H1 (cell line): ENCODE measurements at regions of chr4 and their contacts with region 1.

Region 1: DNA sequence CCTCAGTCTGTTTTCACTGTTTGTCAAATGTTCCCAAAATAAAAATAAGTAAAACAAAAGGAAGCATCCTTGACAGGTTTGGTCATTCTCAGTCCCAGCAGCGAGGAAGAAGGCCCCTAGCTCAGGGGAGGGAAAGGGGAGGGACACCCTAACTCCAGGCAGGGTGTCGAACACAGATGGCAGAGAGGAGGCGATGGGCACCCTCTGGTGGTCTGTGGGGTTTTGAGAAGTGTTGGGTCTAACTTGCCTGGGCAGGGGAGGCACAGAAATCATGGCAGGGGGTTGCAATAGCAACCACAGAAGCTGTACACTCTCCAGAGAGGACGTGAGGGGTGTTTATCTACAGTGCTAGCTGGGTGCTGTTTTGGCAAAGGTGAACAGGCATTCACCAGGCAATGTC is 229.8 kb upstream of the SFRP2 start:
- DNase-seq: peak; percentile 39 to 76
- H3K4me3 ChIP-seq: no peak overlapping the region
- H3K27ac ChIP-seq: no peak overlapping the region
- H3K4me1 ChIP-seq: no peaks in the 10 kb centered on the region
- H3K27me3 ChIP-seq: no peaks in the 10 kb centered on the region
- CTCF ChIP-seq: peak; percentile 70 to 79 (median 70)
- EP300 ChIP-seq: no peak
- POLR2A ChIP-seq: no peak
- RAD21 ChIP-seq: peak; percentile 87 to 88

Region 2: DNA sequence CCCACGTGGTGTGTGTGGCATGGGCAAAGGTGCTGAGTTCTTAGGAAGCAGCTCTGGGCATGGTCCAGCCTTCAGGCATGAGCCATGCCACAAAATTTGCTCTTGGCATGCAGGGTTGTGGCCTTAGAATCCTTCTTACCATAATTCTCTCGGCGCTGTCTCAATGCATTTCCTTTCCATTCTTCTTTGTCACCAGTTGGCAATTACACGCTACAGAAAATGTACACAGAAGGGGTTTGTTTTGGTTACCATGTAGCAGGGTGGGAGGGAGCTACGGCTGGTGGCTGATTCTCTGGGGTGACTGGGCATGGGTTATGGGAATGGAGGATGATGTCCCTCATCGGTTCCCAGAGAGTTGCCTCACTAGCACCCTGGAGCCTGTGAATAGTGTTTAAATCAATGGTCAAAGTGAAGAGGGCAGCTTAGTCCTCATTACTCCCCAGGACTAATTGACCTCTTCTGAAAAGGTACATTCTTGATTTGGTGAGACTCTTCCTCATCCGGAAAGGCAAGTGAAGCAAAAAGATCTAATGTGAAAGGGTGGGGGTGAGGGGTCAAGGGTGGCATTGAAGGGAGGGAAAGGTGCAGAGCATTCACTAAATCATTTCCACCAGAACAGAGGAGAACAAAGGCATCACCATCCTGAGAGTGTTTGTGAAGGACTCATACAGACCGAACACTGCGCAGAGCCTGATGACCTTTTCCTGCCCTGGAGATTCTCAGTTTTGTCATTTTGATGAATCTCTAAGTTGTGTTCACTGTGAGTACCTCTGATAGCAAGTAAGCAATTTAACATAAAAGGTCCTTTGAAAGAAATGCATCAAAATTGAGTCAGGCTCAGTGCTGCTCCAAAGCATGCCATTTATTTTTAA is 29.9 kb before region 1 on chr4:
- CTCF ChIA-PET with region 1: no interaction called
- POLR2A ChIA-PET with region 1: no interaction called
- DNase-seq: no peak
- H3K4me3 ChIP-seq: no peak overlapping the region
- H3K27ac ChIP-seq: no peak overlapping the region
- H3K4me1 ChIP-seq: no peaks in the 10 kb centered on the region
- H3K27me3 ChIP-seq: peaks cover 0 to 1% (median 0%) of the 10 kb centered on the region in 4 experiments; a peak in 1 of 7 replicates
- CTCF ChIP-seq: no peak
- EP300 ChIP-seq: no peak
- POLR2A ChIP-seq: no peak
- RAD21 ChIP-seq: no peak

Region 3: GRCh38 chr4:154033921-154034320 is 15.3 kb after region 1 on chr4:
- CTCF ChIA-PET with region 1: interaction called, 13 read pairs
- POLR2A ChIA-PET with region 1: no interaction called
- DNase-seq: no peak
- H3K4me3 ChIP-seq: no peak overlapping the region
- H3K27ac ChIP-seq: no peak overlapping the region
- H3K4me1 ChIP-seq: peaks cover 0 to 4% (median 2%) of the 10 kb centered on the region in 4 experiments; a peak in 2 of 7 replicates
- H3K27me3 ChIP-seq: no peaks in the 10 kb centered on the region
- CTCF ChIP-seq: no peak
- EP300 ChIP-seq: no peak
- POLR2A ChIP-seq: no peak
- RAD21 ChIP-seq: no peak